ENCODE measurements at regions of chr12 and their contacts with region 1.

Region 1: DNA sequence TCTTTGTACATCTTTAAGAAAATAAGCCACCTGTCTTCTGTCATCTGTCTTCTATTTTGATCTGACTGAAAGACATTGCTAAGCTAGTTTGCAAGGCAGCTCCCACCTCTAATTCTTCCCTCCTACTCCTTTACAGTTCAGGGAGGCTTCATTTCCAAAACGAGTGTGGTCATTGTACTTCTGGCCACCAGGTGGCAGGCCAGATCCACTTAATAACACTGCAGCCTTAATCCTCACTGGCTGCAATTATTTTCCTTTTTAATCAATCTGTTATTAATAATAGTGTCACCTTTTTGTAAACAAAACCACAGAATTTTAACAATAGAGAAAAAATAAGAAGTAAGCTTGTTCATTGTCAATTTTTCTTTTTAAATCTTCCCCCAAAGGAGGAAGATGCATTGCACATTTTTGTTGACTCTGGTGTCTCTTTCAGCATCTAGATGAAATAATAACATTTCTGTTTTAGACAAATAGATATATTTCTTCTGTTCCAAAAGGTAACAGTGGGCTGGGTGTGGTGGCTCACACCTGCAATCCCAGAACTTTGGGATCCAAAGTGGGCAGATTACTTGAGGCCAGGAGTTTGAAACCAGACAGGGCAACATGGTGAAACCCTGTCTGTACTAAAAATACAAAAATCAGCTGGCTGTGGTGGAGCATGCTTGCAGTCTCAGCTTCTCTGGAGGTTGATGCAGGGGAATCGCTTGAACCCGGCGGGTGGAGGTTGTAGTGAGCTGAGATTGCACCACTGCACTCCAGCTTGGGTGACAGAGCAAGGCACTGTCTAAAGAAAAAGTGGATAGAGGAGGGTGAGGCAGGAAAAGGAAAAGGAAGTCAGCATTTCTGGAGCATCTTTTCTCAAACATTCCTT is 23.3 kb downstream of the GABARAPL1 start:
- DNase-seq: peak in 4 of 5 donors; percentile 22 to 52 (median 40)
- H3K4me3 ChIP-seq: no peak overlapping the region
- H3K27ac ChIP-seq: no peak overlapping the region
- H3K4me1 ChIP-seq: no peaks in the 10 kb centered on the region
- H3K27me3 ChIP-seq: no peaks in the 10 kb centered on the region
- CTCF ChIP-seq: peak; percentile 73 to 82 (median 79)
- EP300 ChIP-seq: no peak
- POLR2A ChIP-seq: no peak

Region 2: DNA sequence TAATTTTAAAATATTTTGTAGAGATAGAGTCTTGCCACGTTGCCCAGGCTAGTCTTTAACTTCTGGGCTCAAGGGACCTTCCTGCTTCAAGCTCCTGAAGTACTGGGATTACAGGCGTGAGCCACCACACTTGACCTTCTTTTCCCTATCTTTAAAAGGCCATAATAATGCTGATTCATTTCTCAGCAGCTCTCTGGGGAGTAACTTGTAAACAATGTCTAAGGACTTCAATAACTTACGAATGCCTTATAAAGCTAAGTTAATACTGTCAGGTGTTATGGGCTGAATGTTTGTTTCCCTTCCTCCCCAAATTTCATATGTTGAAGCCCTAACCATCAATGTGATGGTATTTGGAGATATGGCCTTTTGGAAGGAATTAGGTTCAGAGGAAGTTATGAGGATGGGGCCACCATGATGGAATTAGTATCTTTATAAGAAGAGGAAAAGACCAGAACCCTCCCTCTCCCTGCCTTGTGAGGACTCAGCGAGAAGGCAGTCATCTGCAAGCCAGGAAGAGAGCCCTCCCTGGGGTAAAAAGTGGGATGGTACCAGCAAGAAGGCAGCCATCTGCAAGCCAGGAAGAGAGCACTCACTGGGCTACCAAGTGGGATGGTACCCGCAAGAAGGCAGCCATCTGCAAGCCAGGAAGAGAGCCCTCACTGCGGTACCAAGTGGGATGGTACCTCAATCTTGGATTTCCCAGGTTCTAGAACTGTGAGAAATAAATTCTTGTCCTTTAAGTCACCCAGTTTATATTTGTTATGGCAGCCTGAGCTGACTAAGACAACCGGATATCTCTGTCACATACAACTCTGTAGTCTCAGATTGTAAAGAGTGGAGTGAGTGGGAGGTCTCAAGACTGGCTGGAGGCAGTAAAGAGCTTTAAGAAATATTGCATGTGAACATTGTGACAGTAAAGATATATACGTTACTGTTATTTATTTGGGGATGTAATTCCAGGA is 503.4 kb after region 1 on chr12:
- intact Hi-C with region 1: loop called in 1 of 4 experiments (anchors 10 kb)
- DNase-seq: no peak
- H3K4me3 ChIP-seq: no peak overlapping the region
- H3K27ac ChIP-seq: no peak overlapping the region
- H3K4me1 ChIP-seq: no peaks in the 10 kb centered on the region
- H3K27me3 ChIP-seq: no peaks in the 10 kb centered on the region
- CTCF ChIP-seq: no peak
- EP300 ChIP-seq: no peak
- POLR2A ChIP-seq: no peak